ENCODE measurements at regions of chr16 and their contacts with region 1.

Region 1: GRCh38 chr16:30032083-30032819 is 1.2 kb upstream of the TLCD3B start:
- DNase-seq: no peak
- H3K4me3 ChIP-seq: no peak overlapping the region
- CTCF ChIP-seq: peak; percentile 77

Region 2: DNA sequence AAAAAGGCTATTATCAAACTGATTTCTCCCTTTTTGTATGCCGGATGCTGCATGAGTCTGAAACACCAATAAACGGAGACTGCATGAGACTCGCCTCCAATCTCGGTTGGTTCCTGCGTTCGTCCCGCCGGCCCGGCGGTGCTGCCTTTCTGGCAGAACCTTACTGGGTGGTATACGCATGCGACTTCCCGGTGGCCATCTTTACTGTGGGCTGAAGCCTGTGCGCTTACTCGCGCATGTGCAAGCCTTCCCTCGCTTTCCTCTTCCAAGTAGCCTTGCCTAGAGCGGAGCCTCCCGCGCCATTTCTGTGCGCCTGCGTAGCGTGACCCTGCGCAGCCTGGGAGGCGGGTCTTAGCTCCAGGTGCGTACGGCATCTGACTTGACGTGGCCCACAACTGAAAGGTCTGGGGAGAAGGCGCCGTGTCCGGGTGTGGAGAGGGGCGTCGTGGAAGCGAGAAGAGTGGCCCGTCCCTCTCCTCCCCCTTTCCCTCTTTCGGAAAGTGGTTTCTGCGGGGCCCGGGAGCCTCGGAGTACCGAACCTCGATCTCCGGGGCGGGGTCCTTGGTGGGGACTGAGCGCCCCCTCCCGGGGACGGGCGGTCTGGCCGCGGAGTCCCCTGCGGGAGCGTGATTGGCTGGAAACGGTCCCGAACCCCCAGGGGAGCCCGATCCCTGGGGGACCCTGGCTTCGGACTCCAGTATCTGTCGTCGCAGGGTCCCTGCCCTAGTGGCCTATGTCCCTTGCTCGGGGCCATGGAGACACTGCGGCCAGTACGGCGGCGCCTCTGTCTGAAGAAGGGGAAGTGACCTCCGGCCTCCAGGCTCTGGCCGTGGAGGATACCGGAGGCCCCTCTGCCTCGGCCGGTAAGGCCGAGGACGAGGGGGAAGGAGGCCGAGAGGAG is 216.2 kb before region 1 on chr16 and contains the start of gene PAGR1:
- CTCF ChIA-PET with region 1: interaction called, 11 read pairs
- POLR2A ChIA-PET with region 1: no interaction called
- DNase-seq: peak; percentile 98
- H3K4me3 ChIP-seq: peak within 1 kb of the TSS; percentile 85
- CTCF ChIP-seq: peak; percentile 91

Region 3: GRCh38 chr16:30018731-30019158 is 13.5 kb before region 1 on chr16:
- CTCF ChIA-PET with region 1: interaction called, 41 read pairs
- POLR2A ChIA-PET with region 1: no interaction called
- DNase-seq: no peak
- H3K4me3 ChIP-seq: no peak overlapping the region
- CTCF ChIP-seq: no peak

Region 4: DNA sequence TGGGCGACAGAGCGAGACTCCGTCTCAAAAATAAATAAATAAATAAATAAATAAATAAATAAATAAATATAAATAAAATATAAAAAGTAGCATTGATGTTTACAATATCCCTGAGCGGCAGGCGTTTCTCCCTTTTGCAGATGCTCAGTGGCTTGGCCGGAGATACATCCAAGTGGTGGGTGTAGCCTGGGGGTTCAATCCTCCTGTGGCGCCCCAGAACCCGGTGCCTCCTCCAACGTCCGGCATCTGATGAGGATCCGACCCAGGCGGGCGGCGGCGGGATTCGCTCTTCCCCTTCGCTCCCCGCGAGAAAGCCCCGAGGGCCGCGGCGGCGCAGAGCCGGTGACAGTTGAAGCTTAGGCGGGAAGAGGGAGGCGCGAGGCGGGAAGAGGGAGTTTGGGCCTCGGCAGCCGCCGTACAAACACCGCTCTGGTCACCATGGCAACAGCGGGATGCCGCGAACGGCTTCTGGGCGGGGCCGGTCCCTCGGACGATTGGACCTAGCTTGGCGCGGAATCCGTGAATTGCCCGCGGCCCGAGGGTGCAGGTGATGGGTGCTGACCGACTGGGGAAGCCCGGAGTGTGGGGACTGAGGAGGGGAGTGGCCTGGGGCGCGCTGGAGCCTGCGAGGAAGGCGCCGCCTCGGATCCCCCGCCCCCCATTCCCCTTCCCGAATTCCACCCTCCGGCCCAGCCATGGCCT is 20.6 kb after region 1 on chr16:
- CTCF ChIA-PET with region 1: interaction called, 28 read pairs
- POLR2A ChIA-PET with region 1: no interaction called
- DNase-seq: no peak
- H3K4me3 ChIP-seq: peak overlapping the region; percentile 83
- CTCF ChIP-seq: no peak

Measured in AG04449 (cell line).